Activated naive CD4-positive, alpha-beta T cell treated with anti-CD3 and anti-CD28 coated beads for 36 hours (primary cell): ENCODE measurements at regions of chr1 and their contacts with region 1.

Region 1: DNA sequence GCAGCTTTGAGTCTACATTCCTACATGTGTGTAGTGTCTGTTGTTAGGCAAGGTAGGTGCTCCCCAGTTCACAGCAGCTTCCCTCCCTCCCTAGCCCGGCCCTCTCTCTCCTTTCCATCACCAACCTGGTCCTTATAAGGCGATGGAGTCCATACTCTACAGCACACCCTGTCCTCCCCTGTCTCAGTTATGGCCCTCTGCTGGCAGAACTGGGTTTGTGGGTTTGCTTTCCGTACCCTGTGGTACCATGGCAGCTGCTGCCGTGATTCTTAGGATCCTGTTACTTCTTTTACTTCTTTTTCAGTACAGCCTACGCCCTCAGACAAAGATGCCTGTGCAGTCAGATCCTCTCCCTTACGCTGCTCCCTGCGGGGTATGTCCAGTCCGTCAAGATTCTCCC is 31.7 kb downstream of the AK5 start:
- DNase-seq: peak; percentile 59
- H3K4me3 Mint-ChIP-seq: no peak overlapping the region
- H3K27ac Mint-ChIP-seq: no peak overlapping the region
- H3K4me1 Mint-ChIP-seq: peaks cover 37% of the 10 kb centered on the region
- H3K27me3 Mint-ChIP-seq: no peaks in the 10 kb centered on the region

Region 2: DNA sequence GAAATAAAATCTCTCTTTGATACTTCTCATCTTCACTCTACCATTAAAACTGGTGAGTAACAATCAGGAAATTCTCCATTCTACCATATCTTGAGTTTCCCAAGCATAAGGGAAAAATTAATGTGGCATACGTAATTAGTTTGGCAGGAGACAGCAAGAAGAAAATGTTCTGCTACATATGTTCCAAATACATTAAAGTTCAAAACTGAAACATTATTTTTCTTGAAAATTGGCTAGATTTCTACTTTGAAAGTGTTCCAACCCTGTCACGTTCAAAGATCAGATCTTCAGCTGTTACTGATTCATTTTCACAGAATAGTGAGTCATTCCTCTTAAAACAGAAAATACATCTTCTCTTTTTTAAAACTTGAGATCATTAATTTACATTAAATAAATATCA is 142.8 kb before region 1 on chr1:
- CTCF ChIA-PET with region 1: no interaction called
- intact Hi-C with region 1: loop called (anchors 5 kb)
- DNase-seq: no peak
- H3K4me3 Mint-ChIP-seq: no peak overlapping the region
- H3K27ac Mint-ChIP-seq: peak overlapping the region; percentile 62
- H3K4me1 Mint-ChIP-seq: peaks cover 23% of the 10 kb centered on the region
- H3K27me3 Mint-ChIP-seq: no peaks in the 10 kb centered on the region

Region 3: GRCh38 chr1:77281491-77282186 is 31.9 kb before region 1 on chr1 and contains the start of gene AK5:
- CTCF ChIA-PET with region 1: interaction called, 3 read pairs
- intact Hi-C with region 1: loop called (anchors 1 kb)
- DNase-seq: peak; percentile 58
- H3K4me3 Mint-ChIP-seq: peak within 1 kb of the TSS; percentile 75
- H3K27ac Mint-ChIP-seq: no peak within 1 kb of the TSS
- H3K4me1 Mint-ChIP-seq: peaks cover 37% of the 10 kb centered on the region
- H3K27me3 Mint-ChIP-seq: no peaks in the 10 kb centered on the region
- total RNA-seq, gene AK5: 7.0 to 9.1 TPM

Region 4: GRCh38 chr1:77303387-77303786 is 10.1 kb before region 1 on chr1:
- CTCF ChIA-PET with region 1: interaction called, 5 read pairs
- intact Hi-C with region 1: loop called (anchors 1 kb)
- DNase-seq: peak; percentile 64
- H3K4me3 Mint-ChIP-seq: no peak overlapping the region
- H3K27ac Mint-ChIP-seq: peak overlapping the region; percentile 63
- H3K4me1 Mint-ChIP-seq: peaks cover 39% of the 10 kb centered on the region
- H3K27me3 Mint-ChIP-seq: no peaks in the 10 kb centered on the region

Region 5: DNA sequence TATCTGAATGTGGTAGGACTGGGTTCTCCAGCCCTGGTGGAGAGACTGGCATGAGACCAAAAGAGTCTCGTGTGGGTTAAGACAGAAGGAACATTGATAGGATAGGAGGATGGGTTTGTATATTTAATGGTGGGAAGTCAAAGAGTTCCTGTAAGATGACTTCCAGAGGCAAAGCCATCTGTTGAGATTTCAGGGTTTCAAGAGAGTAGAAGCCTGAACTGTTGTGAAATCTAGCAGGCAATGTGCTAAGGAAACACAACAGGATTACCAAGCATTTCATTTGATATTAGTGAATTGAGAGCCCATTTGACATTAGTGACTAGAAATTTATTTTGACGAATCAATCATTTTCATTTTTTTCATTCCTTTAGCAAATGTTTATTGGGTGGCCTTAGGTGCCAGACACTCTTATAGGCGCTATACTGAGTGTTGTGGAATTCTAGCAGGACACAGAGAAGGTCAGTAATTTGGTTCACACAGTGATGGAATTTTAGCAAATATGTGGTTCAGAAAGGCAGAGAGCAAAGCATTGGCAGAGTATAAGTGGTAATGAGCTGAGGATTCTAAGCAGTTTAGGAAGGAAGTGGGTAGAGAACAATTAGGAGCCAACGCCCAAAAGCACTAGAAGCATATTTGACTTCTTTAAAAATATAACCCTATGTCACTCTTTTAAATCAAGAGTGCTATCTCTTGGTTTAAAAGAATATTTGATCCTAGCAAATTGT is 117.6 kb after region 1 on chr1:
- CTCF ChIA-PET with region 1: no interaction called
- intact Hi-C with region 1: loop called (anchors 2 kb)
- DNase-seq: no peak
- H3K4me3 Mint-ChIP-seq: no peak overlapping the region
- H3K27ac Mint-ChIP-seq: no peak overlapping the region
- H3K4me1 Mint-ChIP-seq: peaks cover 28% of the 10 kb centered on the region
- H3K27me3 Mint-ChIP-seq: no peaks in the 10 kb centered on the region

Region 6: GRCh38 chr1:77759071-77760028 is 445.9 kb after region 1 on chr1 and contains the start of gene USP33:
- CTCF ChIA-PET with region 1: no interaction called
- intact Hi-C with region 1: loop called (anchors 5 kb)
- DNase-seq: peak; percentile 93
- H3K4me3 Mint-ChIP-seq: peak within 1 kb of the TSS; percentile 90
- H3K27ac Mint-ChIP-seq: peak within 1 kb of the TSS; percentile 93
- H3K4me1 Mint-ChIP-seq: peaks cover 46% of the 10 kb centered on the region
- H3K27me3 Mint-ChIP-seq: no peaks in the 10 kb centered on the region
- total RNA-seq, gene USP33: 32.6 to 35.6 TPM

Region 7: GRCh38 chr1:77874804-77875445 is 561.4 kb after region 1 on chr1:
- CTCF ChIA-PET with region 1: no interaction called
- intact Hi-C with region 1: no loop called
- DNase-seq: no peak
- H3K4me3 Mint-ChIP-seq: no peak overlapping the region
- H3K27ac Mint-ChIP-seq: no peak overlapping the region
- H3K4me1 Mint-ChIP-seq: no peaks in the 10 kb centered on the region
- H3K27me3 Mint-ChIP-seq: no peaks in the 10 kb centered on the region